PC-3 (cell line): ENCODE measurements at regions of chr17 and their contacts with region 1.

Region 1: GRCh38 chr17:8542599-8543502 is 87.7 kb downstream of the MYH10 start:
- DNase-seq: peak; percentile 67
- ATAC-seq: peak; percentile 48
- H3K4me3 ChIP-seq: no peak overlapping the region
- H3K27ac ChIP-seq: 0 out of 2 replicates have a peak overlapping the region, but pooled peaks have one; percentile 11
- H3K4me1 ChIP-seq: peaks cover 5% of the 10 kb centered on the region; the same call in 1 of the 2 replicates
- H3K27me3 ChIP-seq: no peaks in the 10 kb centered on the region
- CTCF ChIP-seq: no peak

Region 2: DNA sequence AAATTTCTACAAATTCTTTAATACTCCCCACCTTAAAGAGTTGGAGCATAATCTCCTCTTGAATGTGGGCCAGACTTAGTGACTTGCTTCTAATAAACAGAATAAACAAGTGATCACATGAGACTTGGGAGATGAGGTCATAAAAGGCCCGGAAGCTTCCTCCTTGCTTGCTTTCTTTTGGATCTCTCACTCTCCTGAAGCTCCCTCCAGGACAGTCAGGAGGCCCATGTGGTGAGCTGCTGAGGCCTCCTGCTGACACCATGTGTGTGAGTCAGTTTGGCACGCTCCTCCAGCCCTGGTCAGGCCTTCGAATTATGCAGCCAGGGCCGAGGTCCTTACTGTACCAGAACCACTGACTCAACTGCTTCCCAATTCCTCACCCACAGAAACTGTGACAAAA is 54.0 kb before region 1 on chr17:
- CTCF ChIA-PET with region 1: no interaction called
- POLR2A ChIA-PET with region 1: no interaction called
- intact Hi-C with region 1: no loop called
- DNase-seq: peak; percentile 27
- ATAC-seq: peak; percentile 87
- H3K4me3 ChIP-seq: no peak overlapping the region
- H3K27ac ChIP-seq: no peak overlapping the region
- H3K4me1 ChIP-seq: no peaks in the 10 kb centered on the region
- H3K27me3 ChIP-seq: no peaks in the 10 kb centered on the region
- CTCF ChIP-seq: no peak

Region 3: GRCh38 chr17:8518326-8518725 is 24.5 kb before region 1 on chr17:
- CTCF ChIA-PET with region 1: interaction called, 13 read pairs
- POLR2A ChIA-PET with region 1: no interaction called
- intact Hi-C with region 1: no loop called
- DNase-seq: no peak
- ATAC-seq: no peak
- H3K4me3 ChIP-seq: no peak overlapping the region
- H3K27ac ChIP-seq: no peak overlapping the region
- H3K4me1 ChIP-seq: no peaks in the 10 kb centered on the region
- H3K27me3 ChIP-seq: no peaks in the 10 kb centered on the region
- CTCF ChIP-seq: no peak